Panc1 (cell line): ENCODE measurements at regions of chr1 and their contacts with region 1.

Region 1: GRCh38 chr1:64112281-64112680 is 91.1 kb upstream of the UBE2U start:
- DNase-seq: no peak
- ATAC-seq: no peak
- H3K4me3 ChIP-seq: no peak overlapping the region
- H3K27ac ChIP-seq: no peak overlapping the region
- H3K4me1 ChIP-seq: no peaks in the 10 kb centered on the region
- H3K27me3 ChIP-seq: no peaks in the 10 kb centered on the region
- CTCF ChIP-seq: no peak

Region 2: DNA sequence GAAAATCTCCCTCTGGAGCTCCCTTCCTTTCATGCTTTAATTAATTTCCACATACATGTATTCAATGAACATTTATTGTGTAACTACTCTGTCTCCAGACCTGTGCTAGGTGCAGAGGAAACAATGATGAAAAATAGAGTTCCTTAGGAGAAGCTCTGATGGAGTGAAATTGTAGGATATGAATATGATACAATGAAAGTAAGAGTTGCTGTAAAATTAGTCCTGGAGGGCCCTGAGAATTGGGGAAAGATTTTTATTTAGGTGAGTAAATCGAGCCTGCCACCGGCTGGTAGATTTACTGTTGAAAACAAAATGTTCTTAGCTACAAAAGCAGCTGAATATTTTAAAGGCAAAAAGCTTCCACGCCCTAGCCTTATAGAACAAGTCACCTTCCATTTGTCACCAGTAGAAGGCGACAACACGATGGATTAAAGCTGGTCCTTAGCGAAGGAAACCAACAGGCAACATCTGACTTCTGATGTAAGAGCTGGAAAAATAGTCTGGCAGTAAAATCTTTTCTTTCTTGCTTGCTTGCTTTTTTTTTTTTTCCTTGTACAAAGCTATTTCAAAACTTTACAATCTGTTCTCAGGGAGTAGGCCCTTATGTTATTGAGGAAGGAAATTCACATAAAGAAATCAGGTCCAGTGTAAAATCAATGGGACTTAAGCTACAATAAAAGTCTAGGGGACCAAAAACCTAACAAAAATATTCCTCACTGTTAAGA is 420.4 kb before region 1 on chr1:
- CTCF ChIA-PET with region 1: interaction called, 11 read pairs
- POLR2A ChIA-PET with region 1: no interaction called
- in situ Hi-C with region 1: no loop called
- intact Hi-C with region 1: no loop called
- DNase-seq: peak; percentile 92
- ATAC-seq: peak; percentile 95
- H3K4me3 ChIP-seq: no peak overlapping the region
- H3K27ac ChIP-seq: peak overlapping the region; percentile 93
- H3K4me1 ChIP-seq: peaks cover 14% of the 10 kb centered on the region
- H3K27me3 ChIP-seq: no peaks in the 10 kb centered on the region
- CTCF ChIP-seq: peak; percentile 87

Region 3: GRCh38 chr1:63710308-63710707 is 402.0 kb before region 1 on chr1:
- CTCF ChIA-PET with region 1: no interaction called
- POLR2A ChIA-PET with region 1: interaction called, 11 read pairs
- in situ Hi-C with region 1: no loop called
- intact Hi-C with region 1: no loop called
- DNase-seq: no peak
- ATAC-seq: no peak
- H3K4me3 ChIP-seq: no peak overlapping the region
- H3K27ac ChIP-seq: 0 out of 2 replicates have a peak overlapping the region, but pooled peaks have one; percentile 17
- H3K4me1 ChIP-seq: peaks cover 16% of the 10 kb centered on the region
- H3K27me3 ChIP-seq: no peaks in the 10 kb centered on the region
- CTCF ChIP-seq: no peak

Region 4: DNA sequence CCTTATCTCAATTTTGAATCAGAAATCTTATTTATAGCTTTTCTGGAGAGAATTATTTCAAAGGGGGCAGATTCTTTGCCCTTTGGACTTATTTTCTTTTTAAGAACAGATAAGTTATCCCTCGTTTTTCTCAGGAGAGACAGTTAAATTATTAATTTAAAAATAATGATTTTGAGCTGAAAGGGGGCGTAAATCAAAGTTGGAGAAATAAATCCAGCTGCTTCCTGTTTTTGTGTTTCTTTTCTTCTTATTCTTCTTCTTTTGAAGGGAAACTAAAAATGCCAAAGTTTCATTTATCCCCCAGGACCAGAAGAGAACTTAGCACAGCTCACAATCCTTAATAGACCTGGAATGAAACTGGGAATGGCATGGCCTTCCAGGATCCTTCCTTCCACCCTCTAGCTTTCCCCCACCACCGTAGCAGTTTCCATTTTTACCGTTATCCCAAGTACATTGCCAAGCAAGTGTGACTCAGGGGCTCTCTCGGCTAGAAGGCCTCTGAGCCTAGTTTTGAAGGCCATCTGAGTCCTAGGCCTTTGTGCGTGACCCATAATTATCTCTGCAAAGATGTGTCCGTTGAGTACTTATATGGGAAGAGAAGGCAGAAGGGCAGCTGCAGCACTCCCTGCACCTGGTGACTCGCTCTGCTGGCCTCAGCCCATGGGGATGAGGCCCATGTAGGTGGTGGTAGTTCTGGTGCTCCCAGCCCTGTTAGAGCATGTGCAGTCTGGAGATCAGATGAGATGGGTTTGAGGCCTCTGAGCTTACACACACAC is 156.7 kb before region 1 on chr1:
- CTCF ChIA-PET with region 1: no interaction called
- POLR2A ChIA-PET with region 1: no interaction called
- in situ Hi-C with region 1: no loop called
- intact Hi-C with region 1: no loop called
- DNase-seq: no peak
- ATAC-seq: no peak
- H3K4me3 ChIP-seq: no peak overlapping the region
- H3K27ac ChIP-seq: no peak overlapping the region
- H3K4me1 ChIP-seq: no peaks in the 10 kb centered on the region
- H3K27me3 ChIP-seq: no peaks in the 10 kb centered on the region
- CTCF ChIP-seq: no peak